ENCODE measurements at regions of chr11 and their contacts with region 1.

Region 1: GRCh38 chr11:83235825-83236224 is 42.3 kb downstream of the ANKRD42 start:
- DNase-seq: no peak
- H3K4me3 ChIP-seq: no peak overlapping the region
- H3K27ac ChIP-seq: no peak overlapping the region
- H3K4me1 ChIP-seq: no peaks in the 10 kb centered on the region
- H3K27me3 ChIP-seq: no peaks in the 10 kb centered on the region
- CTCF ChIP-seq: no peak
- POLR2A ChIP-seq: no peak

Region 2: DNA sequence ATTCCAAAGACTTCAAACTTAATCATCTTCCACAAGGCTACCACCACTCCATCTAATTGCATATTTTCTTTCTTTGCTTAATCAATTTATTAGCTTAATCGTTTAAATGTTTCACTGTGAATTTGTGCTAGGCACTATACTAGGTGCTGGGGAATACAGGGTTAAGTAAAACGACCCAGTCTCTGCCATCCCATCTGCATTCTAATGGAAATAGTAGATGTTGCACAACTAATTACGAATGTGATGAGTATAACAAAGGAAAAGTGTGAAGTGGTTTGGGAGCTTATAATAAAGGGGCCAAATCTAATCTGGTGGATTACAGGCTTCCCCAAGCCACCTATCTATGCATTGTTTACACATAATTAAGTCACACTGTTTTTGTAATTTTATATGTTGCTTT is 649.2 kb before region 1 on chr11:
- CTCF ChIA-PET with region 1: no interaction called
- POLR2A ChIA-PET with region 1: no interaction called
- dilution Hi-C with region 1: no loop called
- intact Hi-C with region 1: no loop called
- DNase-seq: no peak
- H3K4me3 ChIP-seq: no peak overlapping the region
- H3K27ac ChIP-seq: no peak overlapping the region
- H3K4me1 ChIP-seq: no peaks in the 10 kb centered on the region
- H3K27me3 ChIP-seq: no peaks in the 10 kb centered on the region
- CTCF ChIP-seq: no peak
- POLR2A ChIP-seq: no peak

Region 3: GRCh38 chr11:83249972-83250593 is 14.3 kb after region 1 on chr11:
- CTCF ChIA-PET with region 1: interaction called, 17 read pairs
- POLR2A ChIA-PET with region 1: no interaction called
- dilution Hi-C with region 1: no loop called
- intact Hi-C with region 1: no loop called
- DNase-seq: peak; percentile 46
- H3K4me3 ChIP-seq: no peak overlapping the region
- H3K27ac ChIP-seq: no peak overlapping the region
- H3K4me1 ChIP-seq: no peaks in the 10 kb centered on the region
- H3K27me3 ChIP-seq: no peaks in the 10 kb centered on the region
- CTCF ChIP-seq: peak; percentile 35 to 53
- POLR2A ChIP-seq: no peak